ENCODE measurements at regions of chr4 and their contacts with region 1.

Region 1: DNA sequence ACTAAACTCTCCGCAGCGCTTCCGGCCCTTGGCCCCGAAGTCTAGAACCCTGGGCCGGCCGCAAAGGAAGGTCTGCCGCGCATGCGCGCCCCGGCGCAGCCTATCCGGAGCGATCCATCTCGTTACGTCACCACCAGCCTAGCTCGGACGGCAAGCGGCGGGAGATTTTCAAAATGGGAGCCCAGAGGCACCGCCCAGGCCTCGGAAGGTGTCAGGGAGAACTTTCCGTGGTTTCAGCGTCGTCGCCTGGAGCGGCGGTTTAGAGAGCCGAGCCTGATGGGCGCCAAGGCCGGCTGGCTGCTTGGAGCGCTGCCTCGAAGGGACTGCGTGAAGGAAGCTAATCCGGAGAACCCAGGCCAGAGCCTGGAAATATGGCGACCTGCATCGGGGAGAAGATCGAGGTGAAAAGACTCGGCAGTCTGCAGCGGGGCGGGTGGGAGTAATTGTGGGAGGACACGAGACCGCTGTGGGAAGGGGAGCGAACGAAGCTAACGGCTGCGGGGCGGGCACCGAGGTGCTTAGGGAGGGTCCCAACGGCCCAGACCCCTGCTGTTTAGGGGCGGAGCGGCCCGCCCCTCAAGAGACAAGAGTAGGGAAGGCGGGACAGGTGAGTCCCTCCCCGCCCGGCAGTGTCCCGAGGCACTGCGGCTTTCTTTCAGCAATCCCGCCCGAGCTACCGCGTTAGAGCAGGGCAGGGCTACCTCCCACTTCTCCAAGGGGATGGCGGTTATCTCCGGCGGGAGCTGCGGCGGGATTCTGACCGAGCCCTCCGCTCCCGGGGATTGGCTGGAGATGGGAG is at the start of gene PLK4:
- DNase-seq: peak; percentile 81 to 95
- ATAC-seq: peak; percentile 91 to 93
- H3K4me3 ChIP-seq: peak within 1 kb of the TSS; percentile 80
- H3K27ac ChIP-seq: peak within 1 kb of the TSS; percentile 91 to 95
- H3K4me1 ChIP-seq: peaks cover 10% of the 10 kb centered on the region
- CTCF ChIP-seq: no peak
- EP300 ChIP-seq: no peak
- POLR2A ChIP-seq: no peak; the same call in 1 of the 2 replicates
- RAD21 ChIP-seq: peak in 1 of 2 experiments; percentile 17; a peak in 1 of 5 replicates
- polyA plus RNA-seq, gene PLK4: 28.5 and 34.2 TPM in 2 replicates

Region 2: GRCh38 chr4:127747883-127748282 is 133.1 kb before region 1 on chr4:
- CTCF ChIA-PET with region 1: no interaction called
- POLR2A ChIA-PET with region 1: no interaction called
- DNase-seq: no peak
- ATAC-seq: no peak
- H3K4me3 ChIP-seq: no peak overlapping the region
- H3K27ac ChIP-seq: no peak overlapping the region
- H3K4me1 ChIP-seq: no peaks in the 10 kb centered on the region
- CTCF ChIP-seq: no peak
- EP300 ChIP-seq: no peak
- POLR2A ChIP-seq: no peak
- RAD21 ChIP-seq: no peak

Region 3: DNA sequence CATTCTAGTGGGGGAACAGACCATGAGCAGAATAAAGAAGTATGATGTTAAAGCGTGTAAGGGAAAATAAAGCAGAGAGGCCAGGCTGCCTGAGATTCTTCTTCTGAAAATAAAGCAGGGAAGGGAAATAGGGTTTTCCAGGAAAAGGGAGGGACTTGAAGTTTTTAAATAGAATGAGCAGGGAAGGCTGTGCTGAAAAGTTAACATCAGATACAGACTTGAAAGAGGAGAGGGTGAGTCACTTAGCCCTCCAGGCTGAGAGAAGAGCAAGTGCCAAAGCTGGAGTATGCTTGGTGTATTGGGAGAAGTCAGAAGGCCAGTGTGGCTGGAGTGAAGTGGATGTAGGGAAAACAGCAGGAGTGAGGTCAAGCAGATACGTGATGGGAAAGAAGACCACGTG is 10.3 kb before region 1 on chr4:
- CTCF ChIA-PET with region 1: no interaction called
- POLR2A ChIA-PET with region 1: no interaction called
- DNase-seq: peak in 1 of 2 experiments; percentile 6
- ATAC-seq: peak in 1 of 2 experiments; percentile 46; a peak in 2 of 6 replicates
- H3K4me3 ChIP-seq: no peak overlapping the region
- H3K27ac ChIP-seq: no peak overlapping the region
- H3K4me1 ChIP-seq: peaks cover 10% of the 10 kb centered on the region; the same call in 2 of the 3 replicates
- CTCF ChIP-seq: no peak
- EP300 ChIP-seq: no peak
- POLR2A ChIP-seq: no peak
- RAD21 ChIP-seq: no peak

Region 4: GRCh38 chr4:128060699-128061565 is 180.0 kb after region 1 on chr4 and contains the start of gene LARP1B:
- CTCF ChIA-PET with region 1: interaction called, 3 read pairs
- POLR2A ChIA-PET with region 1: interaction called, 10 read pairs
- DNase-seq: peak; percentile 83 to 94
- ATAC-seq: peak; percentile 91 to 94
- H3K4me3 ChIP-seq: peak within 1 kb of the TSS; percentile 75
- H3K27ac ChIP-seq: peak within 1 kb of the TSS; percentile 99
- H3K4me1 ChIP-seq: 0 out of 3 replicates have a peak, but pooled peaks cover 8% of the 10 kb centered on the region
- CTCF ChIP-seq: no peak
- EP300 ChIP-seq: no peak
- POLR2A ChIP-seq: peak; percentile 78
- RAD21 ChIP-seq: no peak
- polyA plus RNA-seq, gene LARP1B: 14.1 and 25.6 TPM in 2 replicates